Activated CD4-positive, alpha-beta T cell treated with anti-CD3 and anti-CD28 coated beads for 36 hours (primary cell): ENCODE measurements at regions of chr3 and their contacts with region 1.

Region 1: GRCh38 chr3:141487521-141488252 is 860 bp downstream of the RASA2 start:
- DNase-seq: peak; percentile 93
- ATAC-seq: peak; percentile 69
- H3K4me3 Mint-ChIP-seq: peak overlapping the region; percentile 77
- H3K27ac Mint-ChIP-seq: peak overlapping the region; percentile 94
- H3K4me1 Mint-ChIP-seq: peaks cover 64% of the 10 kb centered on the region
- H3K27me3 Mint-ChIP-seq: no peaks in the 10 kb centered on the region

Region 2: GRCh38 chr3:140816372-140817195 is 671.1 kb before region 1 on chr3:
- CTCF ChIA-PET with region 1: no interaction called
- POLR2A ChIA-PET with region 1: no interaction called
- intact Hi-C with region 1: no loop called
- DNase-seq: no peak
- ATAC-seq: no peak
- H3K4me3 Mint-ChIP-seq: no peak overlapping the region
- H3K27ac Mint-ChIP-seq: no peak overlapping the region
- H3K4me1 Mint-ChIP-seq: no peaks in the 10 kb centered on the region
- H3K27me3 Mint-ChIP-seq: peaks cover 2% of the 10 kb centered on the region

Region 3: DNA sequence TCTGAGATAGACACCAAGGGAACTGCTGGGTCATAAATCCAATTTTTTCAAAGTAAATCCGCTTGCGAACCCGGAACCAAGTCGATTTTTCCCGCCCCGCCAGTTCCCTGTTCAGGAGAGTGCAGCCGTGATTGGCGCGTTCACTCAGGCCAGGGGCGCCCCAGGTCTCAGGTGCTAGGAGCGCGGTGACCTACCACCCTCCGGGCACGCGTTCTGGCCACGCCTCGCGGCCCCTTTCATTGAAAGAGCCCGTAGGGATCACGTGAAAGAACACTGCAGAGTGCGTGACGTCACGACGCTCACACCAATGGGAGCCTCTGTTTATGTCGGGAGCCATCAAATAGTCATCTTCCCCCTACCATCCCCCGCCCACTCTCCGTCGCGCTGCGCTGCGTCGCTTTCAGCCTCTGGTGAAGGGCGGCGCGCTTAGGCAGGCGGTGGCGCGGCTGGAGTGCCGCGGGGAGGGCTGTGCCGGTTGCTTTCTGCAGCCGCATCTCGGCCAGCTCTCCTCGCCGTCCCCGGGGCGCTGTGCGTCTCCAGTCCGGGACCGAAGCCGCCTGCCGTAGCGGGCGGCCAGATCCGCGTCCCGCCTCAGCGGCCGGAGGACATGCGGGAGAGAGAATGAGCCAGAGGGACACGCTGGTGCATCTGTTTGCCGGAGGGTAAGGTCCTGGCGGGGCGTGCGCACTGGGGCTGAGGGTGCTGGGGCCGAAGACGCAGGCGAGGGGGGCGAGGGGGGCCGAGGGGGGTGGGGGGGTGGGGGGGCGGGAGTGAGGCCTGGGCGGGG is 546.1 kb before region 1 on chr3 and contains the start of gene SLC25A36:
- CTCF ChIA-PET with region 1: no interaction called
- POLR2A ChIA-PET with region 1: no interaction called
- intact Hi-C with region 1: loop called in 1 of 2 experiments (anchors 1 kb)
- DNase-seq: peak; percentile 99
- ATAC-seq: peak; percentile 98
- H3K4me3 Mint-ChIP-seq: peak within 1 kb of the TSS; percentile 93
- H3K27ac Mint-ChIP-seq: peak within 1 kb of the TSS; percentile 95
- H3K4me1 Mint-ChIP-seq: peaks cover 37% of the 10 kb centered on the region
- H3K27me3 Mint-ChIP-seq: no peaks in the 10 kb centered on the region
- total RNA-seq, gene SLC25A36: 42.3 to 62.3 TPM

Region 4: GRCh38 chr3:141477224-141477623 is 10.5 kb before region 1 on chr3:
- CTCF ChIA-PET with region 1: interaction called, 4 read pairs
- POLR2A ChIA-PET with region 1: interaction called, 3 read pairs
- intact Hi-C with region 1: loop called in 1 of 2 experiments (anchors 1 kb)
- DNase-seq: peak; percentile 38
- ATAC-seq: peak; percentile 68
- H3K4me3 Mint-ChIP-seq: no peak overlapping the region
- H3K27ac Mint-ChIP-seq: no peak overlapping the region
- H3K4me1 Mint-ChIP-seq: peaks cover 30% of the 10 kb centered on the region
- H3K27me3 Mint-ChIP-seq: no peaks in the 10 kb centered on the region

Region 5: GRCh38 chr3:141542989-141543388 is 55.3 kb after region 1 on chr3:
- CTCF ChIA-PET with region 1: no interaction called
- POLR2A ChIA-PET with region 1: interaction called, 3 read pairs
- intact Hi-C with region 1: loop called in 1 of 2 experiments (anchors 1 kb)
- DNase-seq: no peak
- ATAC-seq: no peak
- H3K4me3 Mint-ChIP-seq: no peak overlapping the region
- H3K27ac Mint-ChIP-seq: peak overlapping the region; percentile 77
- H3K4me1 Mint-ChIP-seq: peaks cover 84% of the 10 kb centered on the region
- H3K27me3 Mint-ChIP-seq: no peaks in the 10 kb centered on the region

Region 6: GRCh38 chr3:141625506-141625905 is 137.8 kb after region 1 on chr3:
- CTCF ChIA-PET with region 1: no interaction called
- POLR2A ChIA-PET with region 1: no interaction called
- intact Hi-C with region 1: no loop called
- DNase-seq: no peak
- ATAC-seq: no peak
- H3K4me3 Mint-ChIP-seq: no peak overlapping the region
- H3K27ac Mint-ChIP-seq: no peak overlapping the region
- H3K4me1 Mint-ChIP-seq: no peaks in the 10 kb centered on the region
- H3K27me3 Mint-ChIP-seq: no peaks in the 10 kb centered on the region

Region 7: DNA sequence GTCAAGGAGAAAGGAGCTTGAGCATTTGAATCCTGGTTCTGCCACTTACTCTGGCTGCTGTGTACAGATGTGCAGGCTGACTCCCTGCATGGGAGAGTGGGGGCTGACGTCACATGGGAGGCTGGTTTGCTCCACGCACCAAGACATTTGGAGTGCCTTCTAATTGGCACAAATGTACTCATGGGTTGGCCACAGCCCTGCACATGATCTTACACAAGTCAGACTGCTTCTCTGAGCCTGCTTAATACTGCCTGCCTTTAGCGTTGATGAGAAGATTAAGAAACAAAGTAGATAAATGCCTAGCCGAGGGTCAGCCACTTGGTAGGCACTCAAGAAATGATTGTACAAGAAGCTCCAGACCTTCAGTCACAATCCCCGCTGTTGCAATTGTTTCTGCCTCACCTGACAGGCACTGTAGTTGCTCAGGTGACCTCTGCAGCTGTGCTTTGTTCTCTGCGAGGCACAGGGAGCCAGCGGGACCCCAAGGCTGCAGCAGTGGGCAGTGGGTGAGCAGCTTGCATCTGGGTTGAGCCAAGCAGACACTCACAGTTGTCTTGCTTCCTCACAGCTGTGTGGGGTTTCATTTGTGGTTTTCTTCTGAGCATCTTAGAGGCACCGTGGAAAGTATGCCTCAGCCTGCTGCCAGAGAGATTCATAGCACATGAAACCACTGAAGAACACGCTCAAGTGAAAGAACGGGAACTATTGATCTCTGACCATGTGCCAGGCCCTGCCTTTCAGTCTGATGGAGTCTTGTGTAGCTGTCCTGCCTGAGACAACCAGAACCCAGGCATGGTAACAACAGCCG is 308.6 kb after region 1 on chr3:
- CTCF ChIA-PET with region 1: no interaction called
- POLR2A ChIA-PET with region 1: no interaction called
- intact Hi-C with region 1: loop called (anchors 5 to 10 kb)
- DNase-seq: peak; percentile 90
- ATAC-seq: peak; percentile 84
- H3K4me3 Mint-ChIP-seq: peak overlapping the region; percentile 77
- H3K27ac Mint-ChIP-seq: peak overlapping the region; percentile 97
- H3K4me1 Mint-ChIP-seq: peaks cover 52% of the 10 kb centered on the region
- H3K27me3 Mint-ChIP-seq: no peaks in the 10 kb centered on the region